Caki2 (cell line): ENCODE measurements at regions of chr10 and their contacts with region 1.

Region 1: GRCh38 chr10:12663863-12664262 is 314.5 kb downstream of the CAMK1D start:
- DNase-seq: no peak

Region 2: GRCh38 chr10:12510501-12510941 is 153.3 kb before region 1 on chr10:
- in situ Hi-C with region 1: no loop called
- DNase-seq: peak; percentile 50

Region 3: GRCh38 chr10:12703813-12704212 is 40.0 kb after region 1 on chr10:
- in situ Hi-C with region 1: loop called (anchors 5 kb)
- DNase-seq: peak; percentile 68